Activated T-helper 1 cell treated with anti-CD3 and anti-CD28 coated beads, Interleukin-12 subunit alpha, Interleukin-12 subunit beta, Interleukin-2, Interleukin-4 antibody, amounts not matched to agents 30 ng/mL and 10 ng/mL and 1 ng/mL, durations not matched to agents 14 hours and 24 hours and 36 hours (primary cell): ENCODE measurements at regions of chr17 and their contacts with region 1.

Region 1: GRCh38 chr17:64063766-64064224 is 43.4 kb upstream of the ICAM2 start:
- DNase-seq: peak; percentile 23
- H3K4me3 Mint-ChIP-seq: no peak overlapping the region
- H3K27ac Mint-ChIP-seq: peak overlapping the region; percentile 63
- H3K4me1 Mint-ChIP-seq: peaks cover 91% of the 10 kb centered on the region
- H3K27me3 Mint-ChIP-seq: no peaks in the 10 kb centered on the region

Region 2: DNA sequence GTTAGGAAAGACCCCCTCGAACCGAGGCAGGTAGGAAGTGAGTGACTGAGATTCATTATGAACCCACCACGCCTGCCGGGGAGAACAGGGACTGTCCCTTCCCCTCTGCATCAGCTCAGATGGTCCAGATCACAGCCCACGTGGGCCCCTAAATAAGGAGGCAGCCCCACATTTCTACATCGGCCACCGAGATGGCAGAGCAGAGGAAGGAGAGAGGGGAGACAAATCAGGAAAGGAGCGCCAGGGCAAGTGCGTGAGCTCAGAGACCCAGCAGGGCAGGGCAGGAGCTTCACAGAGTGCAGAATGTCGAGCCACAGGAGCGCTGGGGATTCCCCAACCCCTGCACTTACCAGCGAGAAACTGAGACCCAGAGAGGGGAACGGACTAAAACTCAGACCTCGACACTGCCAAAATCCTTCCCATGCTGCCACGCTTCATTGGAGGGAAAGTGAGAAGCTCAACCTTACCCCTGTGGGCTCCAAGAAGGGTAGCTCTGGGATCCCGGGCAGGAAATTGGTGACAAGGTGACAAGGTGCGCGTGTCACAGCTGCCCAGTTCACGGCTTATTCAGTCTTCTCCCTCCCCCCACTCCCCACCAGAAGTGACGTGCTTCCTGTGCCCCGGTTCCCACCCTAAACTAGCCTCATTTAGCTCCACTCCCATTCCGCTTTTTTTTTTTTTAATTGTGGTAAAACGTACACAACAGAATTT is 43.6 kb before region 1 on chr17 and contains the start of gene ICAM2:
- intact Hi-C with region 1: loop called (anchors 2 kb)
- DNase-seq: peak; percentile 84
- H3K4me3 Mint-ChIP-seq: peak within 1 kb of the TSS; percentile 97
- H3K27ac Mint-ChIP-seq: peak within 1 kb of the TSS; percentile 100
- H3K4me1 Mint-ChIP-seq: peaks cover 91% of the 10 kb centered on the region
- H3K27me3 Mint-ChIP-seq: no peaks in the 10 kb centered on the region
- total RNA-seq, gene ICAM2: 58.3 and 62.1 TPM in 2 replicates

Region 3: DNA sequence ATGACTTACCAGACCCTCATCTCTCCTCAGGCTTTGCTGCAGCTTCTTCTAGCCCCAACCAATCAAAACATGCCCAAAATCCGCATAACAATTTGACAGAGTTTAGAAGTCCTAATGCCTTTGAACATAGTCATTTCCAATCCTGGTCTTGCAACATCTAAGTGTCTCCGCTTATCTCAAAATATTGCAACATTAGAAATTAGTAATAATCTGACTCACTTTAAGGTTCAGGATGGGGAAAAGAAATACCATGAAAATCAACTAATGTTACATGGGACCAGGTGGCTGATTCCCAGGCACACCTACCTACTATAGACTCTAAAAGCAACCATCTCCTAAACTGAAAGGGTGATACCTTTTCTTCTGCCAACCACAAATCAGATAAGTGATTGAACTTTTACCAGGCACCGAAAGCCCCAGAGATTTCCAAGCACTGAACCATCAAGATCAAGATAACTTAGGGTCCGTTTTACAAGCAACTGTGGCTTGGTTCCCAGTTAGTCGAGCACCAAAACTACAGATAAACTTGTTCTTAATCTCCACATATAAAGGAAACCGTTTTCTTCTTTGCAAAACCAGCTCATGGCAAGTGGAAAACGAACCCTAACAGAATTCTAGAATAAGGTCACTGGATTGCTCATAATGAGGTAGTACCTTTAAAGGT is 52.2 kb after region 1 on chr17:
- intact Hi-C with region 1: loop called (anchors 2 kb)
- DNase-seq: no peak
- H3K4me3 Mint-ChIP-seq: peak overlapping the region; percentile 70
- H3K27ac Mint-ChIP-seq: peak overlapping the region; percentile 83
- H3K4me1 Mint-ChIP-seq: peaks cover 68% of the 10 kb centered on the region
- H3K27me3 Mint-ChIP-seq: no peaks in the 10 kb centered on the region